PC-3 (cell line): ENCODE measurements at regions of chr11 and their contacts with region 1.

Region 1: GRCh38 chr11:76721755-76722677 is 51.5 kb upstream of the LRRC32 start:
- DNase-seq: peak; percentile 94
- ATAC-seq: peak; percentile 99
- H3K4me3 ChIP-seq: peak overlapping the region; percentile 50; the same call in 1 of the 2 replicates
- H3K27ac ChIP-seq: no peak overlapping the region
- H3K4me1 ChIP-seq: peaks cover 6% of the 10 kb centered on the region; the same call in 1 of the 2 replicates
- H3K27me3 ChIP-seq: peaks cover 22% of the 10 kb centered on the region; the same call in 1 of the 2 replicates
- CTCF ChIP-seq: peak; percentile 96

Region 2: GRCh38 chr11:76588455-76589325 is 133.3 kb before region 1 on chr11:
- CTCF ChIA-PET with region 1: no interaction called
- POLR2A ChIA-PET with region 1: no interaction called
- intact Hi-C with region 1: no loop called
- DNase-seq: no peak
- ATAC-seq: no peak
- H3K4me3 ChIP-seq: no peak overlapping the region
- H3K27ac ChIP-seq: no peak overlapping the region
- H3K4me1 ChIP-seq: peaks cover 10% of the 10 kb centered on the region; the same call in 1 of the 2 replicates
- H3K27me3 ChIP-seq: no peaks in the 10 kb centered on the region
- CTCF ChIP-seq: no peak

Region 3: GRCh38 chr11:76978818-76979217 is 256.8 kb after region 1 on chr11:
- CTCF ChIA-PET with region 1: interaction called, 10 read pairs
- POLR2A ChIA-PET with region 1: no interaction called
- intact Hi-C with region 1: no loop called
- DNase-seq: no peak
- ATAC-seq: no peak
- H3K4me3 ChIP-seq: no peak overlapping the region
- H3K27ac ChIP-seq: no peak overlapping the region
- H3K4me1 ChIP-seq: no peaks in the 10 kb centered on the region; the same call in 1 of the 2 replicates
- H3K27me3 ChIP-seq: no peaks in the 10 kb centered on the region
- CTCF ChIP-seq: no peak